Aorta (tissue), 5 donors: ENCODE measurements at regions of chr17 and their contacts with region 1.

Region 1: GRCh38 chr17:73311781-73312641 is at the start of gene CDC42EP4:
- DNase-seq: peak; percentile 97 to 99
- ATAC-seq: peak; percentile 95
- H3K4me3 ChIP-seq: peak within 1 kb of the TSS; percentile 74 to 93
- H3K27ac ChIP-seq: peak within 1 kb of the TSS; percentile 45 to 90
- H3K4me1 ChIP-seq: peaks cover 0 to 1% of the 10 kb centered on the region in 2 donors
- H3K27me3 ChIP-seq: no peaks in the 10 kb centered on the region
- total RNA-seq, gene CDC42EP4: 62.8 to 73.7 TPM

Region 2: GRCh38 chr17:73291260-73291801 is 20.7 kb before region 1 on chr17:
- intact Hi-C with region 1: loop called in 1 of 2 experiments (anchors 2 kb)
- DNase-seq: peak; percentile 91
- ATAC-seq: peak; percentile 69
- H3K4me3 ChIP-seq: no peak overlapping the region
- H3K27ac ChIP-seq: peak overlapping the region; percentile 90 to 92
- H3K4me1 ChIP-seq: peaks cover 0 to 5% of the 10 kb centered on the region in 2 donors
- H3K27me3 ChIP-seq: no peaks in the 10 kb centered on the region

Region 3: DNA sequence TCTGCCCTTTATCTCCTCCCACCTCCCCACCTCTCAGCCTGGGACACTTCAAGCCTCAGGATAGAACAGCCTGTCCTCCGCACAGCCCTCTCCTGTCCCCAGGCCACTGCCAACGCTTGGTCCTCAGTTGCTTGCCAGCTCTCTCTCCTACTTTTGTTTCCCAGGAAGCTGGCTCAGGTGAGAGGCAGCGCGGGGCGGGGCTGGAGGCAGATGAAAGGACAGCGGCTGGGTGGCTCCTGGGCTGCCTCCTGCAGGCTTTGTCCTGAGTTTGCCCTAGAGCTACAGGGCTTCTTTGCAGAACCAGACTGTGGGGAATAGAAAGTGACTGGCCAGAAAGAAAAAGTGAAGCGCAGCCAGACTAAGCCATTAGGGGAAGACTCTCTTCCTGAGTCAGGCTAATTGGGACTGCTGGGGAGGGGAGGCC is 48.0 kb after region 1 on chr17:
- intact Hi-C with region 1: loop called (anchors 10 kb)
- DNase-seq: no peak
- ATAC-seq: no peak
- H3K4me3 ChIP-seq: no peak overlapping the region
- H3K27ac ChIP-seq: no peak overlapping the region
- H3K4me1 ChIP-seq: no peaks in the 10 kb centered on the region
- H3K27me3 ChIP-seq: no peaks in the 10 kb centered on the region

Region 4: DNA sequence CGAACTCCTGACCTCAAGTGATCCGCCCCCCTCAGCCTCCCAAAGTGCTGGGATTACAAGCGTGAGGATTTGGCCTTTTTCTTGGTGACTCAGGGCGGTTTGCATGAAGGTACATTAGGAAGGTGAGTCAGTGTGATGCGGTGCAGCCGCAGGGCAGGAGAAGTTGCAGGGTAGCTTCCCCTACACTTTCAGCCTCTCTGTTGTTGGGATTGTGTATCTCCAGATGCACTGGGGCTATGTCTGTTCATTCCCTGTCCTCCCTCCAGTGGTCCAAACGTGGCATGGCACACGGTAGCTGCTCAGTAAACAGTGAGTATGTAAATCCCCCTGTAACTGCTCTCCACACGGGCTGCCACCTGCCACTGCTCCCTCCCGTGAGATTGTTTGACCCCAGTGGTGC is 108.9 kb after region 1 on chr17:
- intact Hi-C with region 1: no loop called
- DNase-seq: peak in 1 of 2 donors; percentile 24
- ATAC-seq: no peak
- H3K4me3 ChIP-seq: no peak overlapping the region
- H3K27ac ChIP-seq: no peak overlapping the region
- H3K4me1 ChIP-seq: no peaks in the 10 kb centered on the region
- H3K27me3 ChIP-seq: no peaks in the 10 kb centered on the region